PC-9 (cell line): ENCODE measurements at regions of chr1 and their contacts with region 1.

Region 1: GRCh38 chr1:12477936-12478611 is 139.9 kb downstream of the DHRS3 start:
- DNase-seq: peak; percentile 94 to 95
- H3K4me3 ChIP-seq: peak overlapping the region; percentile 29; the same call in 1 of the 2 replicates
- H3K27ac ChIP-seq: peak overlapping the region; percentile 96
- H3K4me1 ChIP-seq: peaks cover 82% of the 10 kb centered on the region
- H3K27me3 ChIP-seq: no peaks in the 10 kb centered on the region
- CTCF ChIP-seq: no peak

Region 2: GRCh38 chr1:12386130-12386529 is 91.9 kb before region 1 on chr1:
- CTCF ChIA-PET with region 1: no interaction called
- POLR2A ChIA-PET with region 1: interaction called, 3 read pairs
- intact Hi-C with region 1: loop called (anchors 1 kb)
- DNase-seq: peak; percentile 52 to 83
- H3K4me3 ChIP-seq: no peak overlapping the region
- H3K27ac ChIP-seq: peak overlapping the region; percentile 64
- H3K4me1 ChIP-seq: peaks cover 37% of the 10 kb centered on the region
- H3K27me3 ChIP-seq: no peaks in the 10 kb centered on the region
- CTCF ChIP-seq: no peak

Region 3: GRCh38 chr1:12434174-12434573 is 43.9 kb before region 1 on chr1:
- CTCF ChIA-PET with region 1: no interaction called
- POLR2A ChIA-PET with region 1: no interaction called
- intact Hi-C with region 1: loop called (anchors 1 kb)
- DNase-seq: no peak
- H3K4me3 ChIP-seq: no peak overlapping the region
- H3K27ac ChIP-seq: peak overlapping the region; percentile 28
- H3K4me1 ChIP-seq: peaks cover 35% of the 10 kb centered on the region
- H3K27me3 ChIP-seq: no peaks in the 10 kb centered on the region
- CTCF ChIP-seq: no peak

Region 4: DNA sequence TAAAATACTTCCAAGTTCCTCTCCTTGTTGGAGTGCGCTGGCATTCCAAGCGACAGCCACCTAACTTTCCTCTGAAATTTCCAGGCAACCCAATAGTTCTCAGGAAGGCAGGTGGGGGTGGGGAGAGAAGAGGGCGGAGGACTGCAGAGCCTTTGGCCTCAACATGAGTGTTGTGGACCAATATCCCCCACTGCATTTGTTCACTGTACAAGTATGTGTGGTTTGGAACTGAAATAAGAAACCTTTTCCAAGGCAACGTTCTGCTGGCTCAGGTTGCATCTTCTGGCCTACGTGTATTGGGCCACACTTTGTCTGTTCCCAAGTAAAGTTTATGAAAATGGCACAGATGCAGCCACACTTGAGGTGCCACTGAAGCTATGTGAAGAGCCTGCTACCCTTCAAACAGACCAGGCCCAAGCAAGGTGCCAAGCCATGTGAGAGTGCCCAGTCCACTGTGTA is 13.4 kb before region 1 on chr1:
- CTCF ChIA-PET with region 1: interaction called, 7 read pairs
- POLR2A ChIA-PET with region 1: interaction called, 11 read pairs
- intact Hi-C with region 1: no loop called
- DNase-seq: peak; percentile 37 to 55
- H3K4me3 ChIP-seq: no peak overlapping the region
- H3K27ac ChIP-seq: no peak overlapping the region
- H3K4me1 ChIP-seq: peaks cover 25% of the 10 kb centered on the region
- H3K27me3 ChIP-seq: no peaks in the 10 kb centered on the region
- CTCF ChIP-seq: no peak

Region 5: DNA sequence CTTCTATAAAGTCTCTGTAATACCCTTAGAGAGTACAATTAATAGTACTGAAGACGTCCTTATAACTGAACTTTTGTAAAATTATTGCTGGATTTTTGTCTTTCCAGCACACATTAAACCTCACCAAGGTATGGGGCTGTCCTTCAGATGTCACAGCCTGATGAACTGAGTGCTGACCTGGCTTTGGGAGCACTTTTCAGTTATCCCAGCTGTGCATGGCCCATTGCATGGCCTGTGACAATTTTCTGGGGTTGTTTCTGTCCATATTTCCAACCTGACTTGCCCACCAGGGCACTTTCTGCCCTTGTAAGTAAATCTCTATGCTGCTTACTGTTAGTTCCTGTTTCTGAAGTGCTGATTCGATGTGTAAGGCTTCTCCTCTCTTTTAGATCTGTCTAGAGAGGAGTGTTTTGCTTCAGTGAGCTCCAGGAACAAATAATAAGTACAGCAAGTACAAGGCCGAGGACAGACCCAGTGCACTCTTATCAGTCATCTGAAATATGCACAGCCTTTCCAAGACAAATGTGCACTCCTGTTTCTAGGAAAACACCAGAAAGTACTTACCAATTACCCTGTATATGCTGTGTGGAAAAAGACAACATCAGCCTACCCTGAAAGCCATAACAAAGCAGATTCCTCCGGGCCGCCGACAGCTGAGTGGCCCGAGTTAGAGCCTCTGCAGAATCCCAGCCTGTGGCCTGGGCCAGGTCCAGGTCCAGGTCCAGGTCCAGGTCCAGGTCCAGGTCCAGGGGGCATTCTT is 18.3 kb after region 1 on chr1:
- CTCF ChIA-PET with region 1: no interaction called
- POLR2A ChIA-PET with region 1: no interaction called
- intact Hi-C with region 1: no loop called
- DNase-seq: no peak
- H3K4me3 ChIP-seq: no peak overlapping the region
- H3K27ac ChIP-seq: no peak overlapping the region
- H3K4me1 ChIP-seq: no peaks in the 10 kb centered on the region
- H3K27me3 ChIP-seq: no peaks in the 10 kb centered on the region
- CTCF ChIP-seq: no peak

Region 6: DNA sequence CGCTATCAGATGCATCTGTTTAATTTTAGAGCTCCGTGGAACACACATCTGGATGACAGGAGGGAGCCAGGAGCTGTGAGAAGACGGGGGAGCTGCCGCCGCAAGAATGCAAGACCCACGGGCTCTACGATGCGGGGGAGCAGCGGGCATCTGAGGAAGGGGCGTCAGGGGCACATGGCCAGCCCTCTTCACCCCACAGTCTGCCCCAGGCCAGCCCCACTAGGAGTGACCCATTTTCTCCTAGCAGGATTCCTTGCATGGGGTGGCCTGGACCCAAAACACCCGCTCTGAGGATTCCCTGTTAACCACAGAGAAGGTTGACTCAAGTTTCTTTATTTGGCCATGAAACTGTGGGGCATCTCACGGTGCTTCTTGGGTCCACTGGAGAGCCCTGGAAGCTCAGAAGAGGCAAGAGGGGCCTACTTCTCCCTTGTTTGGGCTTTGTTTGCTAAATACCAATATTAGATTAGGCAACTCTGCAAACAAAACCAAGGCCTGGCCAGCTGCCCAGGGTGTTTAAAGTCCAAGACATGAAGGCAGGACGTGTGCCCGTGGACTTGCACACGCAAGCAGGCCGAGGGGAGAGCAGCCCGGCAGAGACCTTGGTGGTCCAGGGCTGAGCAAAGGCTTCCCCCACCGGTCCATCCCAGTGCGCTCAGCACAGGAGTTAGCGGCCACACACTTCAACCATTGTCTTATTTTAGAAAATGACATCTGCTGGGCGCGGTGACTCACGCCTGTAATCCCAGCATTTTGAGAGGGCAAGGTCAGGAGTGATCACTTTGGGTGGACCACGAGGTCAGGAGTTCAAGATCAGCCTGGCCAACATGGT is 50.2 kb after region 1 on chr1:
- CTCF ChIA-PET with region 1: no interaction called
- POLR2A ChIA-PET with region 1: no interaction called
- intact Hi-C with region 1: no loop called
- DNase-seq: peak; percentile 37 to 82
- H3K4me3 ChIP-seq: no peak overlapping the region
- H3K27ac ChIP-seq: peak overlapping the region; percentile 62
- H3K4me1 ChIP-seq: peaks cover 49% of the 10 kb centered on the region
- H3K27me3 ChIP-seq: no peaks in the 10 kb centered on the region
- CTCF ChIP-seq: no peak

Region 7: DNA sequence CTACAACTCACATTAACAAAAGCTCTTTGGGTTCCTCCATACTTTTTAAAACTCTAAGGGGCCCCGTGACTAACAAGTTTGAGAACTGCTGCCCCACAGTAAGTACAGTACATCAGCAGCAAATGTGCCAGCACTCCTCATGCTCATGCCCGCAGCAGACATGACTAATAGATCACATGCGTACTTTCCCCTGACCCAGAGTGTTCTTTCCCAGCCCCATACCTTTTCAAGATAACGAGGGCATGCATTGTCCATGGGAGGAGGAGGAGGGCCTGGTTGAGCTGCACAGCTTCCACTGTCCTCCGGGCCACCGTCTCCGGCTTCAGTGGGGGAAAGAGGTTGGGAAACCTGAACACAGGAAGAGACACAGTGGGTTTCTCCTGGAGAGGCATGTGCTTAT is 94.4 kb after region 1 on chr1:
- CTCF ChIA-PET with region 1: no interaction called
- POLR2A ChIA-PET with region 1: no interaction called
- intact Hi-C with region 1: loop called (anchors 1 kb)
- DNase-seq: no peak
- H3K4me3 ChIP-seq: no peak overlapping the region
- H3K27ac ChIP-seq: no peak overlapping the region
- H3K4me1 ChIP-seq: peaks cover 20% of the 10 kb centered on the region
- H3K27me3 ChIP-seq: no peaks in the 10 kb centered on the region
- CTCF ChIP-seq: no peak

Region 8: DNA sequence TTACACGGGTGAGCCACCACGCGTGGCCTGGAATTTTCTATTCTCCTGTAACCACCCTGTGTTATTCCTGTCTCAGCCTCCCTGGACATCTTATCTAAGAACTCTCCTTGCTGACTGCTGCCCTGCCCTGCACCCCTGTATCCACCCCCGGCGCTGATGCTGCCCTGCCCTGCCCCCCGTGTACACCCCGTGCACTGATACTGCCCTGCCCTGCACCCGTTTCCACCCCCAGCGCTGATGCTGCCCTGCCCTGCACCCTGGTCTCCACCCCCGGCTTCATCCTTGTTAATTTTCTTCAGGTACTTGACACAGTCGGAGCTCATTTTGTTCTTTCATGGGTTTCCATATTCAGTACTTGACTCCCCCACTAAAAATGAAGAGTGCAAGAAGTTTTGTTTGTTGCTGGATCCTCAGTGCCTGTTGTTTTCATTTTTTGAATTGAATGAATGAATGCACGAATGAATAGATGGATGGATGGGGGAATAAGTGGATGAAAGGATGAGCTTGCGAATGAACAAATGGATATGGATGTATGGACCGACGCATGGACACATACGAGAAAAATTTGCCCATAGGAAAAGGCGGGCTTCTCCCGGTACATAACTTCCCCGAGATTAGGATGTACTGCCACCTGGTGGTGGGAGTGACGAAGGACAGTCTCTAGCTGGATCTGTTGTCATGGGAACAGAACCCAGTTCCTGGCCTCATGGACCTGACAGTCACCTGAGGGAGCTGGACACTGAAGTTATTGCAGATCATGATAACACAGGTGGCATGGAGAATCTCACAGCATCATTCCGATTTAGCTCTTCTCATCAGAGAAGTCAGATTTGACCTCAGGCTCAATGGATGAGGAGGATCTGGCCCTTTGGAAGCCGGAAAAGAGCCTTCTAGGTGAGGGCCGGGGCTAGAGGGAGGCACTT is 180.7 kb after region 1 on chr1:
- CTCF ChIA-PET with region 1: no interaction called
- POLR2A ChIA-PET with region 1: no interaction called
- intact Hi-C with region 1: loop called (anchors 1 kb)
- DNase-seq: peak; percentile 62 to 64
- H3K4me3 ChIP-seq: no peak overlapping the region
- H3K27ac ChIP-seq: no peak overlapping the region
- H3K4me1 ChIP-seq: no peaks in the 10 kb centered on the region
- H3K27me3 ChIP-seq: no peaks in the 10 kb centered on the region
- CTCF ChIP-seq: peak; percentile 88

Region 9: GRCh38 chr1:12722626-12723025 is 244.6 kb after region 1 on chr1:
- CTCF ChIA-PET with region 1: no interaction called
- POLR2A ChIA-PET with region 1: no interaction called
- intact Hi-C with region 1: no loop called
- DNase-seq: no peak
- H3K4me3 ChIP-seq: no peak overlapping the region
- H3K27ac ChIP-seq: no peak overlapping the region
- H3K4me1 ChIP-seq: no peaks in the 10 kb centered on the region
- H3K27me3 ChIP-seq: peaks cover 9% of the 10 kb centered on the region; the same call in 1 of the 2 replicates
- CTCF ChIP-seq: no peak